Posterior vena cava (tissue), 2 donors: ENCODE measurements at regions of chr13 and their contacts with region 1.

Region 1: DNA sequence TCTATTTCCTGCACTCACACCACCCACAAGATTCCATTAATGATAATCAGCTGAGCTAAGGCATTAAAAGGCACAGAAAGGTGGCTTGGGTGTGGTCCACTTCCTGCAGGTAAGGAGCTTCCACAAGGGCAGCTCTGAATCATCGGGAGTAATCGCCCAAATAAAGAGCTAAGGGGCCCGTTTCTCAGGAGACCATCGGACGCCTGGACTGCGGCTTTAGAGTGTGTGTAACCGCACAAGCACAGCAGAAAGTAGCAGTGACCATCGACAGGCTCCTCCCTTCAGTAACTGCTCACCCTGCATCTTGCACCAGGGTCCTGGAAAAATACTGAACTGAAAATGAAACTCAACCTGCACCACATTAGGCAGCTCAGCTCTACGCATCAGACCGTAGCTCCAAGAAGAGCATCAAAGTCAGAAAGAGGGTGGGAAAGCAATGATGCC is 6.0 kb downstream of the STK24 start:
- DNase-seq: no peak

Region 2: DNA sequence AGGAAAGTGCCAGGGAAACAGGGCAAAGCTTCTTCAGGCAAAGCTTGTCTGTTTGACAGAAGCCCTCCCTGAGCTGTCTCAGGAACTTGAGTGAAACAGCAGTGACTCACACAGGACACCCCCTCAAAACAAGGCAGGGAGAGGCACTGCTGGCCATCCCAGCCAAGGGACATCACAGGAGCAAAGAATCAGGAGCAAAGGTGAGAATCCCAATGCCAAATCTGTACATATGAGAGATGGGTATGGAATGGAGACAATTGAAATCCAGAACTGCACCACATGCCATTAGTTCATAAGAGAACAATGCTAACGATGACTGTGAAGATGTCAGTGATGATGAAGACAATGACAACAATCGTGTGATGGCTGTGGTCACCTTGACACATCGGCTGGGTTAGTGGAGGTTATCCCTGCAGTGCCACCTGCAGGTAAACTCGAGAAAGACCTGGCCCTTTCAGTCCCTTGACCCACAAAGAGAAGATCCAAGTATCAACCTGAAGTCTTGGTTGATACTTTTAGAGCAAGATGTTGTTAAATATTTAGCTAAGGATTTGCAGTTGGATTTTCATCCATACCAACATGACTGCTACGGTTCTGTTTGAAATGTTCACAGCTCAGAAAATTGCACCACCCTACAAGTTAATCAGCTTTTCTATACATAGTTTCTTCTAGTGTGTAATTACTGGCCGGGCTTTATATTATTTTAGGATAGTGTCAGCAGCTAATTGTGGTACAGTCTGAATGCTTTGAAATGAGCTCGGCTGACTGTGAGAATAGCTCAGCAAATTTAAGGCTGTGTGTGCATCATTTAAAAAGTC is 659.4 kb before region 1 on chr13:
- intact Hi-C with region 1: no loop called
- DNase-seq: no peak

Region 3: GRCh38 chr13:98456413-98456845 is 114.5 kb before region 1 on chr13:
- intact Hi-C with region 1: loop called in 1 of 2 experiments (anchors 5 kb)
- DNase-seq: no peak